Activated naive CD4-positive, alpha-beta T cell treated with anti-CD3 and anti-CD28 coated beads for 36 hours (primary cell): ENCODE measurements at regions of chr4 and their contacts with region 1.

Region 1: GRCh38 chr4:109278594-109279031 is 23.8 kb downstream of the COL25A1 start:
- DNase-seq: no peak
- H3K4me3 Mint-ChIP-seq: no peak overlapping the region
- H3K27ac Mint-ChIP-seq: no peak overlapping the region
- H3K4me1 Mint-ChIP-seq: peaks cover 10% of the 10 kb centered on the region
- H3K27me3 Mint-ChIP-seq: peaks cover 1% of the 10 kb centered on the region

Region 2: DNA sequence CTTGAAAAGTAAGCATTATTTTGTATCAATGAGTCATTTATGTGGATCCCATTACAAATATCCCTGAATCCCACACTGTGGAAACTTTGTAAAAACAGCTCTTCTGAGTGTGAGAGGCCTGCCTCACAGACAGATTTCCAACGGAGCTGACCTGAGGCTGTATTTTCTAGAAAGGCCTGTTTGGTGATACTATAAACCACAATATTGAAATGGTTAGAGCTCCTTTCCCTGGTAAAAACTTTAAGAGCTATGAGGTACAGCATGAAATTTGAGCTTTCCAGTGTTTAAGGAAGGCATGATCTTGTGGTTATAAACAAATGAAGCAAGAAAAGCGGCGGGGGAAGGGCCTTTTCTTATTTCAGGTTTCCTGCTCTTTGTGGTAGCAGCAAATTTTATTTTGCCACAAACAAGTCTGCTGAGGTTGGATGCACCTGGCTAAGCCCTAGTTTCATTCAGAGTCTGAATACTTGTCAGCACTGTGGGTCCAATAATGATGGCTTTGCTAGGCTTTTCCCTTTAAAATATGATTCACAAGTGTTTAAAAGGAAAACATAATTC is 428.9 kb before region 1 on chr4:
- CTCF ChIA-PET with region 1: no interaction called
- intact Hi-C with region 1: loop called (anchors 5 kb)
- DNase-seq: peak; percentile 56
- H3K4me3 Mint-ChIP-seq: no peak overlapping the region
- H3K27ac Mint-ChIP-seq: no peak overlapping the region
- H3K4me1 Mint-ChIP-seq: peaks cover 25% of the 10 kb centered on the region
- H3K27me3 Mint-ChIP-seq: no peaks in the 10 kb centered on the region

Region 3: GRCh38 chr4:109334129-109335105 is 55.8 kb after region 1 on chr4:
- CTCF ChIA-PET with region 1: no interaction called
- intact Hi-C with region 1: no loop called
- DNase-seq: no peak
- H3K4me3 Mint-ChIP-seq: no peak overlapping the region
- H3K27ac Mint-ChIP-seq: no peak overlapping the region
- H3K4me1 Mint-ChIP-seq: no peaks in the 10 kb centered on the region
- H3K27me3 Mint-ChIP-seq: peaks cover 2% of the 10 kb centered on the region